Adrenal gland (tissue), 19 donors: ENCODE measurements at regions of chr2 and their contacts with region 1.

Region 1: DNA sequence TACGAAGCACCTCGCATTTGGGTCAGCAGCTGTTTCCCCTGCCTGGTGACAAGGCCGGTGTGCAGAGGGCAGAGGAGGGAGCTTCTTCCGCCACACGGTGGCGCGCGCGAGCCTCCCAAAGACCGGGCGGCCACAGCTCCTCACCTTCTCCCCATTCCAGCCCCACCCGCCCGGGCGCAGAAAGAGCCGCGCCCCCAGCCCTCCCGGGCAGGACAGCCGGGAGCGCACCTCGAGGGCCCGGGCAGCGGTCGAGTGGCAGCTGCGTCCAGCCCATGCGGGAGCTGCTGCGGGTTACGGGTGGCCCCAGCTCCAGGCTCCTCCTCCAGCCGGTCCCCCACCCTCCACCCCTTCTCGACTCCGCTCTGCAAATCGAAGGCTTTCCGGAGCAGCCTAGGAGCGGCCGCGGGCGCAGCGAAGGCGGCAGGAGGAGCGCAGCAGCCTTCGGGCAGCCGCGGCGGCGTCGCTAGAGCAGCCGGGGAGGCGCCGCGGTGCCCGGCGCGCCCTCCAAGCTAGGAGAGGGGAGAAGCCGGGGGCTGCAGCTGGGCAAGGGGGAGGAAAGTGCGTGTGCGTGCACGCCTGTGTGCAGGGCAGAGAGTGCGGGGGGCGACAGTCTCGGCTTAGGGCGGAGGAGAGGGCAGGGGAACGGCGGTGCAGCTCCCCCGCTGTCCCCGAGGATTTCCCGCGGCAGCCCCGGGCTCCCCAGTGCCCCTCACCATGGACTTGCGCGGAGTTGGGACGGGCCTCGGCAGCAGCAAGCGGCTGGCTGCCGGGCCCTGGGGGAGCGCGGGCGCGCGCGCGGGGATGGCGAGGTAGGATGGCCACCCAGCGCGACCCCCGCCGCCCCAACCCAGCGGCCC is at the start of gene CCDC85A:
- DNase-seq: peak; percentile 75 to 92 (median 87)
- H3K4me3 ChIP-seq: peak within 1 kb of the TSS in 3 of 4 donors; percentile 25 to 67 (median 50)
- H3K27ac ChIP-seq: peak within 1 kb of the TSS in 1 of 5 donors; percentile 2
- H3K4me1 ChIP-seq: peaks cover 5 to 16% of the 10 kb centered on the region in 2 donors
- H3K27me3 ChIP-seq: peaks cover 17% of the 10 kb centered on the region
- CTCF ChIP-seq: peak; percentile 71 to 96 (median 84)
- POLR2A ChIP-seq: no peak
- total RNA-seq, gene CCDC85A: 0.46 to 1.1 (median 0.85) TPM in 8 of 9 donors, not detected in the other

Region 2: GRCh38 chr2:56705713-56706112 is 521.8 kb after region 1 on chr2:
- intact Hi-C with region 1: no loop called
- DNase-seq: no peak
- H3K4me3 ChIP-seq: no peak overlapping the region
- H3K27ac ChIP-seq: no peak overlapping the region
- H3K4me1 ChIP-seq: no peaks in the 10 kb centered on the region
- H3K27me3 ChIP-seq: no peaks in the 10 kb centered on the region
- CTCF ChIP-seq: no peak
- POLR2A ChIP-seq: no peak

Region 3: DNA sequence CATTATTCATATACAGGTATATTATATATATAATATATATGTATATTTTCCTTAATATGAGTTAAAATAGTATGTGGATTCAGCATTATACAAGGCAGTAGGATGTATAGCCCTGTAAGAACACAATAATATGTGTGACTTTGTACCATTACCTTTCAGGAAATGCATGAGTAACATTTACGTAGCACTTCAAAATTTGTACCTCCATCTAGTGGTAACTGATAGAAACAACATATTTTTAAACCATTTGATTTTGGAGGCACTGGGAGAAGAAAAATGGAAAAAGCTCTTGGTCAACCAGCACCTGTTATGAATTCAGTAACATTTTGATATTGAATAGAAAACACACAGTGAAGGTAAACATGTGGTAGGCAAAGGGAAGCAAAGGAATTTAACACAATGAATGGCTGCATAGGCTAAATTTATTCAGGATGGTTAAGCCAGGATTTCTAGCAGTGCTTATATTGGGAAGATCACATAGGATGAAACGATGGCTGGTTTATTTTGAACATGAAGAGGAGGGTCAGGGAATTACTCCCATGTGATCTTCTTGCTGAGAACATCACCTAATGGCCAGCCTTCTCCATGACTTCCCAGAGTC is 565.4 kb after region 1 on chr2:
- intact Hi-C with region 1: loop called in 1 of 2 experiments (anchors 5 kb)
- DNase-seq: no peak
- H3K4me3 ChIP-seq: no peak overlapping the region
- H3K27ac ChIP-seq: no peak overlapping the region
- H3K4me1 ChIP-seq: no peaks in the 10 kb centered on the region
- H3K27me3 ChIP-seq: no peaks in the 10 kb centered on the region
- CTCF ChIP-seq: peak; percentile 19 to 48 (median 42)
- POLR2A ChIP-seq: no peak

Region 4: GRCh38 chr2:57510704-57511103 is 1326.8 kb after region 1 on chr2:
- intact Hi-C with region 1: loop called in 1 of 2 experiments (anchors 5 kb)
- DNase-seq: no peak
- H3K4me3 ChIP-seq: no peak overlapping the region
- H3K27ac ChIP-seq: no peak overlapping the region
- H3K4me1 ChIP-seq: no peaks in the 10 kb centered on the region
- H3K27me3 ChIP-seq: no peaks in the 10 kb centered on the region
- CTCF ChIP-seq: no peak
- POLR2A ChIP-seq: no peak